ENCODE measurements at regions of chr12 and their contacts with region 1.

Region 1: DNA sequence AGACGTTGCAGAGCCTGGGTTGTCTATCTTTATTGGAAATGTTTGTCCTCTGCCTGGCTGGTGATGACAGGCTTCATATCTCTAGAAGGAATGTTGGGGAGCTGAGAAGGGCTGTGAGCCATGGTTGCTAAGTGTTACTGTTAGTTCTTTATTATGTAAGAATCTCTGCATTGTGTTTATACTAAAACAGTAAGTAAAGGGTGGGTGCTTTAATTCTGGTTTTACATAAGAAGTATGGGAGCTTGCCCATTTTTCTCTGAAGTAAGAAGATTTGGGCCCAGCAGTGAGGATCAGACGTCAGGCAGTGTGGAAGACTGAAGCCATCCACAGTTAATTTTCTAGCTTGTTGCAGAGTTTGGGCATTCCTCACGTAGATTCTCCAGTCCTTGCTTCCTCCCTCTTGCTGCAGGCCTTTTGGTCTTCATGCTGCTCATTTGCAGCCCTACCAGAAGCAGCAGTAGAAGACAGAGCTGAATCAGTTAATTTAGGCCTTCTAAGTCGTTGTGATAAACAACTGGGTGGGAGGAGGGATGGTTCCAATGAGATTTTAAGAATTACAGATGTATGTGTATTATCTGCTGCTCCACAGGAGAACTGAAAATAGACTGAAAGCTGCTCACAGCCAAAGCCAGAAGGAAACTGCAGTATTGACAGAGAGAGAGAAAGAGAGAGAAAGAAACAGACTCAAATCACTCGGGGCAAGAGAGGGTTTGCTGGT is 21.4 kb downstream of the WNT5B start:
- DNase-seq: no peak
- ATAC-seq: no peak
- H3K4me3 ChIP-seq: no peak overlapping the region
- H3K27ac ChIP-seq: no peak overlapping the region
- H3K4me1 ChIP-seq: no peaks in the 10 kb centered on the region
- H3K27me3 ChIP-seq: no peaks in the 10 kb centered on the region

Region 2: GRCh38 chr12:1690578-1691122 is 40.2 kb after region 1 on chr12 and contains the start of gene ADIPOR2:
- intact Hi-C with region 1: loop called in 1 of 2 experiments (anchors 5 kb)
- DNase-seq: peak; percentile 98
- ATAC-seq: peak; percentile 99
- H3K4me3 ChIP-seq: peak within 1 kb of the TSS; percentile 66 to 77
- H3K27ac ChIP-seq: peak within 1 kb of the TSS; percentile 46 to 65
- H3K4me1 ChIP-seq: no peaks in the 10 kb centered on the region
- H3K27me3 ChIP-seq: no peaks in the 10 kb centered on the region
- total RNA-seq, gene ADIPOR2: 47.6 to 50.5 TPM

Region 3: GRCh38 chr12:1795785-1796514 is 145.5 kb after region 1 on chr12:
- intact Hi-C with region 1: loop called (anchors 1 kb)
- DNase-seq: peak; percentile 97 to 98
- ATAC-seq: peak; percentile 96
- H3K4me3 ChIP-seq: peak overlapping the region; percentile 29
- H3K27ac ChIP-seq: no peak overlapping the region
- H3K4me1 ChIP-seq: no peaks in the 10 kb centered on the region
- H3K27me3 ChIP-seq: no peaks in the 10 kb centered on the region

Region 4: GRCh38 chr12:2023365-2023764 is 372.9 kb after region 1 on chr12:
- intact Hi-C with region 1: loop called in 1 of 2 experiments (anchors 10 kb)
- DNase-seq: no peak
- ATAC-seq: no peak
- H3K4me3 ChIP-seq: no peak overlapping the region
- H3K27ac ChIP-seq: no peak overlapping the region
- H3K4me1 ChIP-seq: no peaks in the 10 kb centered on the region
- H3K27me3 ChIP-seq: no peaks in the 10 kb centered on the region

Region 5: GRCh38 chr12:2034633-2035430 is 384.4 kb after region 1 on chr12:
- intact Hi-C with region 1: loop called in 1 of 2 experiments (anchors 10 kb)
- DNase-seq: peak; percentile 92 to 98
- ATAC-seq: peak; percentile 95
- H3K4me3 ChIP-seq: no peak overlapping the region
- H3K27ac ChIP-seq: no peak overlapping the region
- H3K4me1 ChIP-seq: no peaks in the 10 kb centered on the region
- H3K27me3 ChIP-seq: no peaks in the 10 kb centered on the region